ENCODE measurements at regions of chr12 and their contacts with region 1.

Region 1: DNA sequence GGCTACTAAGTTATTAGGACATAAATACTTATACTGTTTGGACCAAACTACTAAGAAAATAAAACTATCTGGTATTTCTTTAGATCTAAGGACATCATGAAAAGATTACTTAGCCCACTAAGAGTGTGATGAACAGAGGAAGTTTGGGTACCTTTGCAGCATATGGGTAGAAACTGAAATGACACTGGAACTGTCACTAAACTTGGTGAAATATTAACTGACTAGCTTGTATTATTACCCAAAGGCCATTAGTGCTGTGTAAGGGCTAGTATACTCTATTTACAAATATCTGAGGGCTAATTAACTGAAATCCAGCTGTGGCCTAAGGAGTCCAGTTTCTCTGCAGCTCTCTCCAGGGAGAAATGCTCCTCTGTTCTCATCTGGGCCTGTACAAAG is 45.5 kb downstream of the PAWR start:
- DNase-seq: peak; percentile 13
- ATAC-seq: peak; percentile 95
- H3K4me3 ChIP-seq: no peak overlapping the region
- H3K27ac ChIP-seq: no peak overlapping the region
- H3K4me1 ChIP-seq: no peaks in the 10 kb centered on the region
- H3K27me3 ChIP-seq: no peaks in the 10 kb centered on the region
- CTCF ChIP-seq: no peak
- EP300 ChIP-seq: no peak
- POLR2A ChIP-seq: no peak
- RAD21 ChIP-seq: no peak

Region 2: DNA sequence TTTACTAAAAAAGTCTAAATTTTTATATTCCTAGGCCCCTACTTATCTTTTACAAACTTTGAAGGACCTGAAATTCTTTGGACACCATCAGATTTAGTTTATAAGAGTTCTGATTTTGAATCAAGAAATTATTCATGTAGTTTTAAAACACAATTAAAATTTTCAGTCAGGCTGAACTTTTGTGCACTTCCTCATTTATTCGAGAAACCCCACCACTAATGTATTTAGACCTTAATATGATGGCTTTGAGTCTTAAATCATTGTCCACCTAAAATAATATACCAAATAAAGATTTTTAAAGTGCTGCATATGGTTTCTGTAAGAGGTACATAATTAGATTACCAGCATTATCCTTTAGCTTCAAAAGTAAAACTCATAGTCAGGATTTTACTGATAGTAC is 57.9 kb before region 1 on chr12:
- CTCF ChIA-PET with region 1: no interaction called
- POLR2A ChIA-PET with region 1: no interaction called
- RAD21 ChIA-PET with region 1: no interaction called
- SMC1A ChIA-PET with region 1: no interaction called
- in situ Hi-C with region 1: no loop called
- intact Hi-C with region 1: no loop called
- DNase-seq: no peak
- ATAC-seq: no peak
- H3K4me3 ChIP-seq: no peak overlapping the region
- H3K27ac ChIP-seq: no peak overlapping the region
- H3K4me1 ChIP-seq: no peaks in the 10 kb centered on the region
- H3K27me3 ChIP-seq: no peaks in the 10 kb centered on the region
- CTCF ChIP-seq: no peak
- EP300 ChIP-seq: no peak
- POLR2A ChIP-seq: no peak
- RAD21 ChIP-seq: no peak

Region 3: GRCh38 chr12:79681008-79681590 is 35.9 kb after region 1 on chr12:
- CTCF ChIA-PET with region 1: interaction called, 3 read pairs
- POLR2A ChIA-PET with region 1: interaction called, 5 read pairs
- RAD21 ChIA-PET with region 1: interaction called, 11 read pairs
- SMC1A ChIA-PET with region 1: interaction called, 21 read pairs
- in situ Hi-C with region 1: no loop called
- intact Hi-C with region 1: loop called (anchors 5 kb)
- DNase-seq: no peak
- ATAC-seq: peak; percentile 32
- H3K4me3 ChIP-seq: no peak overlapping the region
- H3K27ac ChIP-seq: no peak overlapping the region
- H3K4me1 ChIP-seq: peaks cover 5% of the 10 kb centered on the region; the same call in 1 of the 2 replicates
- H3K27me3 ChIP-seq: no peaks in the 10 kb centered on the region
- CTCF ChIP-seq: no peak
- EP300 ChIP-seq: no peak
- POLR2A ChIP-seq: no peak
- RAD21 ChIP-seq: no peak

Measured in GM12878 (cell line).